Stomach (tissue), 19 donors: ENCODE measurements at regions of chr10 and their contacts with region 1.

Region 1: DNA sequence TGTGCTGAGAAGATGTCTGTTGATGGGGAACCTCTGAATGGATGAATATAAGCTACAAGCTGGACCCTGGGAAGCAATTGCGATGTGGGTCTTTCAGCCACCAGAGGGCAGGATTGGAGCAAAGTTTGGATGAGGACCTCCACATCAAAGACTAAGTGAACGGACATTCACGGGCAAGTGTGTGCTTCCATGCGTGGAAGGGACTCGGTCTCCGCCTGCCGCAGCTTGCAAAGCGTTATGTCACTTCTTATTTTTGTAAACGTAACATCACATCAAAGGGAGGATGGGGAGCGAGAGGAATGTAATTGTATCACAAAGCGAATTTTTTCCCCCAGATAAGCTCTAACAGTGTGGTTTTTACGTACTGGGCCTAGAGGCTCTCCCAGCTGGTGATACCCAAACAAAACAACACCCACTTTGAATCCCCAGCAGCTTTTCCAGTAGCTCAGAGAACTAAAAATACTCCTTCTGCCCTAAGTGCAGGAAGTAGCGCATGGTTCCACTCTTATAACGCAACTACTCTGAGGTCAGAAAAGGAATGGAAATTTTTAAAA is 65.0 kb downstream of the VWA2 start:
- DNase-seq: peak; percentile 83 to 94
- H3K4me3 ChIP-seq: peak overlapping the region; percentile 31 to 41 (median 36)
- H3K27ac ChIP-seq: peak overlapping the region in 3 of 5 donors; percentile 26 to 64 (median 52)
- H3K4me1 ChIP-seq: peaks cover 10 to 26% (median 17%) of the 10 kb centered on the region in 4 donors
- H3K27me3 ChIP-seq: peaks cover 0 to 4% (median 0%) of the 10 kb centered on the region in 3 donors
- CTCF ChIP-seq: peak in 5 of 7 experiments; percentile 67 to 91 (median 73)
- EP300 ChIP-seq: no peak
- POLR2A ChIP-seq: no peak

Region 2: DNA sequence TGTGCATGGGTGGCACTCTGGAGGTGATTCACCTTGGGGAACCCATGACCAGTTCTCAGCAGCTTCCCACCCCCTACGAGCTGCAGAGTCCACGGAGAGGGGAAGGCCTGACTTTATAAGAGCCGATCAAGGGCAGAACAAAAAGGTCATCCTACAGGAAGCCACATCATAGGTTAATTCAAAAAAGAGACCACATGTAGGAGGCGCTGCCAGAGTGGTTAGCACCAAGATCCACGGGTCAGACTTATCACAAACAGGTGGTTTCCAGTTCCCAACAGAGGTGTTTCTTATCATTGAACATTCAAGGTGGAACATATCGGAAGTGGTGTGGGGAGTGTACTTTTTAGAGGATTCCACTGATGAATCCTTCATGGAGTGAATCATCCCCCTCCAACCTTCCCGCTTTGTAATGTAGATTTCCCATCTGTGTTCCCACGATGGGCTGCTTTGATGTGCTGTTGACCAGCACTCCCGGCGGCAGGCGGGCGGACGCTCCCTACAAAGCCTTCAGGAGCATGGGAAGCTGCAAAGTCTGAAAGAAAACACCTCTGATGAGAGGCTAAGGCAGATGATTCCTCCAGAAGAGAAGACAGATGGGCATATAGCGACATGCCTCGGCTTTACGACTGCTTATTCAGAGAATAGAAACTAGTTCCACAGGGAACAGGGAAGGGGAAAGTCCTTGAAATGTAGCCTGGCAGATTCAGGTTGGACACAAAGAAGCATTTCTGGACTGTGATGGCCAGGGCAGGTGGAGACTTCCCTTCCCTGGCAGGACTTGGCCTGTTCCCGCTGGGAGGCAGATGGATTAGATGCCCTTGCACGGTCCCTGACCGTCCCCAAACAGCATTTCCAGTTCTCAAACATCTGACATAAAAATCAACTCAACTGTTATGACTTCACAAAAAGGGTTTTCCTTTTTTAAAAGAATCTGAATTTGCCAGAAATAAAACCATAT is 33.7 kb after region 1 on chr10:
- intact Hi-C with region 1: no loop called
- DNase-seq: no peak
- H3K4me3 ChIP-seq: no peak overlapping the region
- H3K27ac ChIP-seq: no peak overlapping the region
- H3K4me1 ChIP-seq: peaks cover 0 to 14% (median 5%) of the 10 kb centered on the region in 4 donors
- H3K27me3 ChIP-seq: no peaks in the 10 kb centered on the region
- CTCF ChIP-seq: no peak
- EP300 ChIP-seq: no peak
- POLR2A ChIP-seq: no peak

Region 3: GRCh38 chr10:114437456-114438292 is 133.6 kb after region 1 on chr10:
- intact Hi-C with region 1: loop called (anchors 10 kb)
- DNase-seq: peak in 1 of 2 donors; percentile 22
- H3K4me3 ChIP-seq: no peak overlapping the region
- H3K27ac ChIP-seq: no peak overlapping the region
- H3K4me1 ChIP-seq: peaks cover 0 to 9% (median 4%) of the 10 kb centered on the region in 4 donors
- H3K27me3 ChIP-seq: no peaks in the 10 kb centered on the region
- CTCF ChIP-seq: peak in 5 of 7 experiments; percentile 23 to 43 (median 26)
- EP300 ChIP-seq: no peak
- POLR2A ChIP-seq: no peak